SK-N-SH (cell line): ENCODE measurements at regions of chr1 and their contacts with region 1.

Region 1: GRCh38 chr1:17507916-17508315 is 31.6 kb upstream of the ARHGEF10L start:
- DNase-seq: peak; percentile 51
- H3K4me3 ChIP-seq: no peak overlapping the region
- H3K27ac ChIP-seq: no peak overlapping the region
- H3K4me1 ChIP-seq: no peaks in the 10 kb centered on the region
- H3K27me3 ChIP-seq: no peaks in the 10 kb centered on the region
- CTCF ChIP-seq: peak; percentile 35
- EP300 ChIP-seq: no peak
- RAD21 ChIP-seq: no peak

Region 2: DNA sequence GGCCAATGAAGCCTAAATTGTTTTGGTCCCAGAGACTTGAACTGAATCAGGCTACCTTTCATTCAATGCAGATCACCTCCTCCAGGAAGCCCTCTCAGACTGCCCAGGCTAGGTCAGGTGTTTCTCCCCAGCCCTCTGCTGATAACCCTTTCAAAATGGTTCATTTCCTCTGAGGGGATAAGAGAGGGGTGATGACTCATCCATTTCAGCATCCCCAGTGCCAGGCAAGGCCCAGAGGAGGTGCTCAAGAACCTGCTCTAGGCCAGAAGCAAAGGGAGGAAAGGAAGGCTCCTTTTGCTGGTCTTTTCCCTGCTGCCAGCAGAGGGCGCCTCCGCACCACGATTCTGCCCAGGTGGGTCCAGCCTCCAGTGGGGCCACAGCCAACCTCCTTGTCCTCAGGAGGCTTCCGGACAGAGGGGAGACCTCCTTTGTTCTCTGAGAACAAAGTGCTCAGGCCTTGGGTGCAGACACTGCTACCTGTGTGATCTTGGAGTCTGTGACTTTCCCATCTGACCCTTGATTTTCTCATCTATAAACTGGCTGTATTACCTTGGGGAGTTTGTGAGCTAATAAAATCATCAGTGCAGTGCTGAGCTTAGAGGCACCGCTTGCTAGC is 13.7 kb before region 1 on chr1:
- CTCF ChIA-PET with region 1: interaction called, 13 read pairs
- POLR2A ChIA-PET with region 1: no interaction called
- DNase-seq: peak; percentile 78
- H3K4me3 ChIP-seq: no peak overlapping the region
- H3K27ac ChIP-seq: no peak overlapping the region
- H3K4me1 ChIP-seq: peaks cover 0 to 2% of the 10 kb centered on the region in 2 experiments; a peak in 1 of 4 replicates
- H3K27me3 ChIP-seq: peaks cover 8% of the 10 kb centered on the region
- CTCF ChIP-seq: peak; percentile 96
- EP300 ChIP-seq: no peak
- RAD21 ChIP-seq: peak; percentile 90

Region 3: DNA sequence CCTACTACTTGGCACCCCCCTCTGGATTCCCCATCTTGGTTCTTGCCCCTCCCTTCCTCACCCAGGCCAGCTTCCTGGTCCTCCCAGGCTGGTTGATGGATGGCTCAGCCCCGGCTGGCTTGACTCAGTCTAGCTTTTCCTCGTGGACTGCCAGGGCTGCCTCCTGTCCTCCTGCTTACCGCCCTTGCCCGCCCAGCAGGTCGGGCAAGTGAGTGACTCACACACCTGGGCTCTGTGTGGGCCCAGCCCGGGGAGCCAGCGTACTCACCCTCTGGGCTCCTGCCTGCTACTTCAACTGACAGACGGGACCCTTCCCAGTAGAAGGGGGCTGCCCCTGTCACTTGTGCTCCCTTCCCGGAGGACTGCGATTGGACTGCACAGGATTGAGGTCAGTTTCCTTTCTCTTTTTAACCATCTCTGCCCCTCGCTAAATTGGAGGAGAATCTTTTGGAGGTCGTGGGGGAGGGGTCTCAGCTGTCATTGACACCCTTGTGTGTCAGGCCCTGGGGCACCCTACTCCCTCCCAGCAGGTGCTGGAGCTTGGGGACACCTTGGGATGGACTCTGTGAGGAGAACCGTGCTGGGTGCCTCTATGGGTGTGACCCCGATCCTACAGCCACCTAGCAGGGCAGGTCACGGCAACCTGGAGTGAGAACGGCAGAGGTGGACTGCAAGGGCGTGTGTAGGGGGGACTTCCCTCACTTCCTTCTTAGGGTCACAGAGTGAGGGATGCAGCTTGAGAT is 12.3 kb after region 1 on chr1:
- CTCF ChIA-PET with region 1: interaction called, 12 read pairs
- POLR2A ChIA-PET with region 1: no interaction called
- DNase-seq: no peak
- H3K4me3 ChIP-seq: no peak overlapping the region
- H3K27ac ChIP-seq: no peak overlapping the region
- H3K4me1 ChIP-seq: peaks cover 0 to 3% of the 10 kb centered on the region in 2 experiments; a peak in 1 of 4 replicates
- H3K27me3 ChIP-seq: no peaks in the 10 kb centered on the region
- CTCF ChIP-seq: no peak
- EP300 ChIP-seq: no peak
- RAD21 ChIP-seq: no peak